T-cell (primary cell): ENCODE measurements at regions of chr14 and their contacts with region 1.

Region 1: GRCh38 chr14:75176142-75176820 is at the start of gene TMED10:
- DNase-seq: peak; percentile 86 to 94 (median 90)
- ATAC-seq: peak; percentile 79 to 81 (median 81)
- H3K4me3 ChIP-seq: peak within 1 kb of the TSS; percentile 88 to 90
- H3K4me3 Mint-ChIP-seq: peak within 1 kb of the TSS; percentile 87 to 95 (median 92)
- H3K27ac ChIP-seq: peak within 1 kb of the TSS; percentile 99
- H3K27ac Mint-ChIP-seq: peak within 1 kb of the TSS; percentile 95 to 97
- H3K4me1 ChIP-seq: peaks cover 24 to 34% of the 10 kb centered on the region in 2 experiments
- H3K4me1 Mint-ChIP-seq: peaks cover 46 to 51% (median 48%) of the 10 kb centered on the region in 3 donors
- H3K27me3 ChIP-seq: no peaks in the 10 kb centered on the region
- H3K27me3 Mint-ChIP-seq: no peaks in the 10 kb centered on the region
- total RNA-seq, gene TMED10: 143 to 193 (median 151) TPM

Region 2: GRCh38 chr14:74932401-74932901 is 243.8 kb before region 1 on chr14:
- CTCF ChIA-PET with region 1: no interaction called
- POLR2A ChIA-PET with region 1: interaction called in 1 of 2 experiments, 11 read pairs
- DNase-seq: no peak
- ATAC-seq: no peak
- H3K4me3 ChIP-seq: no peak overlapping the region
- H3K4me3 Mint-ChIP-seq: no peak overlapping the region
- H3K27ac ChIP-seq: no peak overlapping the region
- H3K27ac Mint-ChIP-seq: no peak overlapping the region
- H3K4me1 ChIP-seq: peaks cover 3 to 4% of the 10 kb centered on the region in 2 experiments
- H3K4me1 Mint-ChIP-seq: peaks cover 16 to 19% (median 16%) of the 10 kb centered on the region in 3 donors
- H3K27me3 ChIP-seq: peaks cover 0 to 18% of the 10 kb centered on the region in 2 experiments
- H3K27me3 Mint-ChIP-seq: peaks cover 0 to 2% of the 10 kb centered on the region in 2 donors

Region 3: GRCh38 chr14:75164809-75165208 is 11.5 kb before region 1 on chr14:
- CTCF ChIA-PET with region 1: interaction called, 3 to 7 read pairs
- POLR2A ChIA-PET with region 1: interaction called, 3 to 16 read pairs
- DNase-seq: no peak
- ATAC-seq: no peak
- H3K4me3 ChIP-seq: no peak overlapping the region
- H3K4me3 Mint-ChIP-seq: no peak overlapping the region
- H3K27ac ChIP-seq: no peak overlapping the region
- H3K27ac Mint-ChIP-seq: no peak overlapping the region
- H3K4me1 ChIP-seq: peaks cover 7 to 11% of the 10 kb centered on the region in 2 experiments
- H3K4me1 Mint-ChIP-seq: peaks cover 72 to 75% (median 75%) of the 10 kb centered on the region in 3 donors
- H3K27me3 ChIP-seq: no peaks in the 10 kb centered on the region
- H3K27me3 Mint-ChIP-seq: no peaks in the 10 kb centered on the region

Region 4: GRCh38 chr14:75258615-75259466 is 82.6 kb after region 1 on chr14:
- CTCF ChIA-PET with region 1: interaction called in 1 of 2 experiments, 4 read pairs
- POLR2A ChIA-PET with region 1: interaction called in 1 of 2 experiments, 12 read pairs
- DNase-seq: peak; percentile 92 to 100 (median 100)
- ATAC-seq: peak; percentile 91 to 98 (median 96)
- H3K4me3 ChIP-seq: peak overlapping the region; percentile 38 to 47
- H3K4me3 Mint-ChIP-seq: peak overlapping the region; percentile 85 to 87 (median 87)
- H3K27ac ChIP-seq: peak overlapping the region; percentile 95
- H3K27ac Mint-ChIP-seq: peak overlapping the region; percentile 98 to 100
- H3K4me1 ChIP-seq: peaks cover 9 to 23% of the 10 kb centered on the region in 2 experiments
- H3K4me1 Mint-ChIP-seq: peaks cover 29 to 45% (median 38%) of the 10 kb centered on the region in 3 donors
- H3K27me3 ChIP-seq: peaks cover 0 to 8% of the 10 kb centered on the region in 2 experiments
- H3K27me3 Mint-ChIP-seq: no peaks in the 10 kb centered on the region

Region 5: GRCh38 chr14:75278422-75279161 is 102.3 kb after region 1 on chr14 and contains the start of gene FOS:
- CTCF ChIA-PET with region 1: no interaction called
- POLR2A ChIA-PET with region 1: interaction called in 1 of 2 experiments, 15 read pairs
- DNase-seq: peak; percentile 77 to 97 (median 91)
- ATAC-seq: peak; percentile 76 to 88 (median 87)
- H3K4me3 ChIP-seq: peak within 1 kb of the TSS; percentile 77 to 94
- H3K4me3 Mint-ChIP-seq: peak within 1 kb of the TSS; percentile 83 to 95 (median 92)
- H3K27ac ChIP-seq: peak within 1 kb of the TSS; percentile 68
- H3K27ac Mint-ChIP-seq: peak within 1 kb of the TSS; percentile 86 to 96
- H3K4me1 ChIP-seq: peaks cover 26 to 61% of the 10 kb centered on the region in 2 experiments
- H3K4me1 Mint-ChIP-seq: peaks cover 57 to 83% (median 77%) of the 10 kb centered on the region in 3 donors
- H3K27me3 ChIP-seq: peaks cover 0 to 50% of the 10 kb centered on the region in 2 experiments
- H3K27me3 Mint-ChIP-seq: peaks cover 8 to 15% of the 10 kb centered on the region in 2 donors
- total RNA-seq, gene FOS: 20.4 to 2,951 (median 27.1) TPM

Region 6: DNA sequence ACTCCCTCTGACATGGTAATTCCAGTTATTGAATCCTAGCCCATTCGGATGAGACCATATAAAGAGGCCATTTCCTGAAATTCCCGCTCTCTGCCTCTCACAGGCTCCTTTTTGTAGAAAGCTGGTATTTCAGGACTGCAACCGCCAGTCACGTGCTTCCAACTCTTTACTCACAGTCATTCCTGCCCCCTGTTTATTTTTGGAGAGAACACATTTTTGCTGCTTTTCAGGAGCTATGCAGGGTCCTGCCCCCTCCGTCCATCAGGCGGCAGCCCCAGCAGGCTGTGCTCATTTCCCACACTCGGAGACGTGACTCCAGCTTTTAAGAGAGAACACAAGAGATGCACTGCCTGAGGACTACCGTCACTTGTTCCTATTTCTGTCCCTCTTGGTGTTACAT is 836.1 kb after region 1 on chr14:
- CTCF ChIA-PET with region 1: interaction called in 1 of 2 experiments, 14 read pairs
- POLR2A ChIA-PET with region 1: no interaction called
- DNase-seq: no peak
- ATAC-seq: no peak
- H3K4me3 ChIP-seq: no peak overlapping the region
- H3K4me3 Mint-ChIP-seq: no peak overlapping the region
- H3K27ac ChIP-seq: no peak overlapping the region
- H3K27ac Mint-ChIP-seq: no peak overlapping the region
- H3K4me1 ChIP-seq: no peaks in the 10 kb centered on the region
- H3K4me1 Mint-ChIP-seq: no peaks in the 10 kb centered on the region
- H3K27me3 ChIP-seq: no peaks in the 10 kb centered on the region
- H3K27me3 Mint-ChIP-seq: no peaks in the 10 kb centered on the region